Posterior vena cava (tissue), 2 donors: ENCODE measurements at regions of chr21 and their contacts with region 1.

Region 1: DNA sequence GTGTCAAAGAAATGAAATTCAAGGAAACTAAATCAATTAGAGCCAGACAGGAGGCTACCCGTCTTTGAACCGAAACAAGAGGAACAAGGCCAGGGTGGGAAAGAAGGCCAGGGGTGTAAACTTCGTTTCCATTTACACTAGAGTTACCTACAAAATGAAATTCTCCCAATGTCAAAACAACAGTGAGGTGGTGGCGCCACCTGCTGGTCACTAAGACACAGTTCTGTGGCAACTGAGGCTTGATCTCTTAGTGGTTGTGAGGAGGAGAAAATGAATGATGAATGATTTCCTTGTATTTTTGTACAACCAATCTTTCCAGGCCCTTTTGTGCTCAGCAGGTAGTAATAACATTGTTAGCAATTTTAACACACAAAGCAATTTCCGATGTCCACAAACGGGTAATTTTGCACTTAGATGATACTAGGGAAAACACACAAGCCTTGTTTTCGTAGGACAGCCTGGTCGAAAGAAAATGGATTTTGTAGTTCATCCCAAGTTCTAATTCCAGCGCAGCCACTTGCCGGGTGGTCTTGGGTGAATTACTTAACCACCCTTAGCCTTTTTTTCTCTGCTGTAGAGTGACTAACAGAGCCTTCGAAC is 54.8 kb upstream of the SOD1 start:
- DNase-seq: peak; percentile 90

Region 2: DNA sequence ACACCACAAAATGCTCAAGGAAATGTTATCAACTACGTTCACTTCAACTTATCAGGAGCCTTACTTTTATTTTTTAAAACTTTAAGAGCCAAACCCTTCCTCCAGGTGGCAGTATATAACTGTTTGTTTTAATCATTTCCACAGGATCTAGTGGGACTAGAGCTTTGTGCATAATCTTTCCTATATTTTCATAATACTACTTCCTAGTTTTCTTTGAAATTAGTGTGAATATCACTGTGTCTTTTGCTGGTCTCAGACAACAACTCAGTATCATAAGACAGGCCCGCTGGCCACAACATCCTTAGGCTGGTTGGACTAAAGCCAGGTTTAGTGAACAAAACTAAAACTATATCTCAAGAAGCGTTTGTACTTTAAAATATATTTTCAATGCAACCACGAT is 406.1 kb before region 1 on chr21:
- intact Hi-C with region 1: loop called in 1 of 2 experiments (anchors 10 kb)
- DNase-seq: no peak